Activated naive CD4-positive, alpha-beta T cell treated with anti-CD3 and anti-CD28 coated beads for 36 hours (primary cell): ENCODE measurements at regions of chr11 and their contacts with region 1.

Region 1: GRCh38 chr11:65047581-65048422 is 6.8 kb downstream of the SAC3D1 start:
- DNase-seq: peak; percentile 24
- H3K4me3 Mint-ChIP-seq: peak overlapping the region; percentile 70
- H3K27ac Mint-ChIP-seq: peak overlapping the region; percentile 18
- H3K4me1 Mint-ChIP-seq: peaks cover 23% of the 10 kb centered on the region
- H3K27me3 Mint-ChIP-seq: no peaks in the 10 kb centered on the region

Region 2: GRCh38 chr11:64406221-64406946 is 641.4 kb before region 1 on chr11:
- CTCF ChIA-PET with region 1: no interaction called
- intact Hi-C with region 1: no loop called
- DNase-seq: no peak
- H3K4me3 Mint-ChIP-seq: no peak overlapping the region
- H3K27ac Mint-ChIP-seq: no peak overlapping the region
- H3K4me1 Mint-ChIP-seq: no peaks in the 10 kb centered on the region
- H3K27me3 Mint-ChIP-seq: no peaks in the 10 kb centered on the region

Region 3: GRCh38 chr11:65078151-65078550 is 30.3 kb after region 1 on chr11:
- CTCF ChIA-PET with region 1: no interaction called
- intact Hi-C with region 1: loop called (anchors 2 kb)
- DNase-seq: peak; percentile 71
- H3K4me3 Mint-ChIP-seq: no peak overlapping the region
- H3K27ac Mint-ChIP-seq: peak overlapping the region; percentile 39
- H3K4me1 Mint-ChIP-seq: peaks cover 43% of the 10 kb centered on the region
- H3K27me3 Mint-ChIP-seq: no peaks in the 10 kb centered on the region

Region 4: GRCh38 chr11:65225279-65226102 is 177.7 kb after region 1 on chr11:
- CTCF ChIA-PET with region 1: no interaction called
- intact Hi-C with region 1: no loop called
- DNase-seq: peak; percentile 81
- H3K4me3 Mint-ChIP-seq: peak overlapping the region; percentile 74
- H3K27ac Mint-ChIP-seq: no peak overlapping the region
- H3K4me1 Mint-ChIP-seq: peaks cover 11% of the 10 kb centered on the region
- H3K27me3 Mint-ChIP-seq: peaks cover 18% of the 10 kb centered on the region